GM12878 (cell line): ENCODE measurements at regions of chr6 and their contacts with region 1.

Region 1: DNA sequence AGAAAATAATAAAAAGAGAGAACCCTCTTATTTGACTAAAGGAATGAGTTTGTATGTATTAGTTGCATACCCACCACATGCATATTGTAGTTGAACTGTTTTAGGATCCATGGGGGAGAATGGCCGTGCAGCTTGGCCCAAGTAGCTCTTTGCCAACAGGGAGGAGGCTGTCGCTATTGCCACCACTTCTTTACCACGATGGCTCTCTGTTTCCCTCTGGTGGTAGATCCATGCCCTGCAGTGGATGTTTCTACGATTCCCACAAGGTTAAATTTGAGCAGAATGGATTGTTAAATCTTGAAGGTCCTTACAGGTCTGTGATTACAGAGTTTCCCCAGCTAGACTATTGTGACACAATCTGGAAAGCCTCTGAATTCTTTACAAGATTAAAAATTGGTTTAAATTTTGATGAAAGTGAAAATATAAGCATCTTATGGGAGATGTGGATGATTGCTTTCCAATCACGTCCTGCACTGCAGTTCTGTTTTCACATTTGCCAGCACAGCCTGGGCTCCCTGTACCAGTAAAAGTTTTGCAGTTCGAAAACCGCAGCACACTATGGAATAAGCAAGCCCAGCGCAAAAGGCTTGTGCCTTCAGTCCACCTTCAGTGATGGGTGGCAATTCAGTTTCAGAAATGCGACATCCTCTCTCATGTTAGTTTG is 34.4 kb upstream of the FNDC1 start:
- DNase-seq: peak; percentile 36
- ATAC-seq: peak; percentile 95
- H3K4me3 ChIP-seq: no peak overlapping the region
- H3K27ac ChIP-seq: no peak overlapping the region
- H3K4me1 ChIP-seq: no peaks in the 10 kb centered on the region
- H3K27me3 ChIP-seq: peaks cover 0 to 2% of the 10 kb centered on the region in 2 experiments; a peak in 1 of 4 replicates
- CTCF ChIP-seq: peak; percentile 89 to 97 (median 96)
- EP300 ChIP-seq: no peak
- POLR2A ChIP-seq: no peak
- RAD21 ChIP-seq: peak; percentile 98

Region 2: DNA sequence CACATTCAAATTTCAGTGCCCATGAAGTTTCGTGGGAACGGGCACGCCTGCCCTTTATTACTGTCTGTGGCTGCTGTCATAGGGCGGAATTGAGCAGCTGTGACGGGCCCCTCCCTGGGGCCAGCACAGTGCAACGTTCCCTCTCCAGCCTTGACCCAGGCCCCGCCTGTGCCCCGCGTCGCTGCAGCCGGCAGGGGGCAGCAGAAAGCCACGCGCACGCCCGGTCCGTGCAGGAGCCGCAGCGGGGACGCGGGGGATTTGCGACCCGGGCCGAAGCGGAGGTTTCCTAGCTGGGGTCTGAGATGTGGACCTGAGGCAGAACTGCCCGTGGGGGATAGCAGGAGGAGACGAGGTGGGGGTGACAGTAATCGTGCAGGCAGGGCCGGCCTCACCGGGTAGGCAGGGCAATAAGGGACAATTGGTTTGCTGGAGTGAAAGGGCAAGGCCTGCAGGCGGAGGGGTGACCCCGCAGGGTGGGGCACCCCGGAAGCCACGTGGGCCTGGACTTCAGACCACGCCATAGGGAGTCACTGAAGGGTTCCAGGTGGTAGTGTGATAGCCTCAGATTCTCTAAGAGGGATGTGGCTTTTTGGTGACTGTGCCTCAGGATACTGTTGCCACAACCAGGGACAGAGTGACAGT is 430.5 kb before region 1 on chr6:
- CTCF ChIA-PET with region 1: interaction called, 7 read pairs
- POLR2A ChIA-PET with region 1: no interaction called
- RAD21 ChIA-PET with region 1: interaction called, 5 read pairs
- SMC1A ChIA-PET with region 1: interaction called, 3 read pairs
- in situ Hi-C with region 1: loop called (anchors 10 kb)
- intact Hi-C with region 1: loop called (anchors 5 kb)
- DNase-seq: no peak
- ATAC-seq: peak; percentile 99
- H3K4me3 ChIP-seq: peak overlapping the region; percentile 45; the same call in 1 of the 2 replicates
- H3K27ac ChIP-seq: no peak overlapping the region
- H3K4me1 ChIP-seq: peaks cover 9% of the 10 kb centered on the region
- H3K27me3 ChIP-seq: no peaks in the 10 kb centered on the region
- CTCF ChIP-seq: peak; percentile 97 to 99 (median 98); a peak in 5 of 6 replicates
- EP300 ChIP-seq: no peak
- POLR2A ChIP-seq: no peak
- RAD21 ChIP-seq: peak; percentile 97

Region 3: DNA sequence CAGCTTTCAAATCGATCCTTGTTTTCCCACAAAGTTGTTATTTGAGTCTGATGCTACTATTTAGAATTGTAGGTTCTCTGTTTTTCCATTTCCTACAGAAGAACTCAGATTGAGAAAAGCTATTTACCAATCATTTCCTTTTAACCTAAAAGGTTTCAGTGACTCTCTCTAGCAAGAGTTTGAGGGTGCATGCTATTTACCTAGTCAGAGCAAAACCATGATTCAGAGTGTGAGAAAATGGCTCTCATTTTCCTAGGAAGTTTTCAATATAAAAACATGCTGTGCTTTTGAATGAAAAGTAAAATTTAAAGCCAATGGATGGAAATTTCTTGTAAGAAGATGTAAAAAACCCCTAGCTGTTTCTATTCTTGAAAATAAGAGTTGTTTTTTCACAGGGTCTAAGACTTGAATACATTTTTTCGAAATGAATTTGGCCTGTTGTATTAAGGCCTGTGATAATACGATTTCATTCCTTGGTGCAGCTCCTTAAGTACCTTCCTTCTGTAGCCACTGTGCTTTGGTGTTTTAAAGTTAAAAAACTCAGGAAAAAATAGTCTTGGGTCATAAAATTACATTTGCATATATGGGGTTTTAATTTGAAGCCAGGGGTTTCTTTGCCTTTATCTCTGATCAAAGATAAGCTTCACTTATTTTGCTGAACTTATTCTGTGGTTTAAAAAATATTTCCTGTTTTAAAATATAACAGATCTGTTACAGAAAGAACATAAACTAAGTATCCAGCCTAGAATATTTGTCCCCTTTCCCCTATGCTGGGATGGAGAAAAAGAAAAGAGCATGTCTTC is 116.9 kb before region 1 on chr6:
- CTCF ChIA-PET with region 1: interaction called, 482 read pairs
- POLR2A ChIA-PET with region 1: no interaction called
- RAD21 ChIA-PET with region 1: interaction called, 11 read pairs
- SMC1A ChIA-PET with region 1: interaction called, 14 read pairs
- in situ Hi-C with region 1: no loop called
- intact Hi-C with region 1: no loop called
- DNase-seq: no peak
- ATAC-seq: peak; percentile 87
- H3K4me3 ChIP-seq: no peak overlapping the region
- H3K27ac ChIP-seq: no peak overlapping the region
- H3K4me1 ChIP-seq: peaks cover 8% of the 10 kb centered on the region
- H3K27me3 ChIP-seq: no peaks in the 10 kb centered on the region
- CTCF ChIP-seq: no peak
- EP300 ChIP-seq: no peak
- POLR2A ChIP-seq: no peak
- RAD21 ChIP-seq: no peak

Region 4: DNA sequence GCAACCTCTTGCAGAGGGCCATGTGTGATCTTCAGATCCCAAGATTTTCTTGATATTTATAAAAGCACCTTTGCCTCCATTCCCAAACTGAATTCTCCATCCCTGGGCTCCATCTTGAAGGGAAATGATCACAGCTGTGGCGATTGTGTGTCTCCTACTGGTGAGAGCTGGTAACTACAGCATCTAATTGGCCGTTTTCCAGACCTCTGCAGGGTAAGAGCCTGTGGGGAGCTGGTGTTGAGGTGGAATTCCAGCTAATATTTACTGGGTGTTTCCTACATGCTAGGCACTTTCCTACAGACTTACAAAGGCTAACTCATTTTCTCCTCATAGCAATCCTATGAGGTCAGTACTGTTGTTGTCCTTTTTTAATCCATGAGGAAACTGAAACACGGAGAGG is 24.8 kb before region 1 on chr6:
- CTCF ChIA-PET with region 1: interaction called, 529 read pairs
- POLR2A ChIA-PET with region 1: interaction called, 12 read pairs
- RAD21 ChIA-PET with region 1: interaction called, 117 read pairs
- SMC1A ChIA-PET with region 1: interaction called, 292 read pairs
- in situ Hi-C with region 1: no loop called
- intact Hi-C with region 1: no loop called
- DNase-seq: no peak
- ATAC-seq: no peak
- H3K4me3 ChIP-seq: no peak overlapping the region
- H3K27ac ChIP-seq: no peak overlapping the region
- H3K4me1 ChIP-seq: peaks cover 36% of the 10 kb centered on the region
- H3K27me3 ChIP-seq: peaks cover 0 to 3% of the 10 kb centered on the region in 2 experiments; a peak in 1 of 4 replicates
- CTCF ChIP-seq: peak; percentile 66 to 88 (median 77)
- EP300 ChIP-seq: no peak
- POLR2A ChIP-seq: no peak
- RAD21 ChIP-seq: peak; percentile 82

Region 5: GRCh38 chr6:159151266-159151855 is 16.5 kb after region 1 on chr6:
- CTCF ChIA-PET with region 1: interaction called, 36 read pairs
- POLR2A ChIA-PET with region 1: no interaction called
- RAD21 ChIA-PET with region 1: interaction called, 4 read pairs
- SMC1A ChIA-PET with region 1: interaction called, 9 read pairs
- in situ Hi-C with region 1: no loop called
- intact Hi-C with region 1: no loop called
- DNase-seq: no peak
- ATAC-seq: peak; percentile 77
- H3K4me3 ChIP-seq: no peak overlapping the region
- H3K27ac ChIP-seq: no peak overlapping the region
- H3K4me1 ChIP-seq: no peaks in the 10 kb centered on the region
- H3K27me3 ChIP-seq: peaks cover 0 to 4% of the 10 kb centered on the region in 2 experiments; a peak in 1 of 4 replicates
- CTCF ChIP-seq: peak; percentile 66 to 83 (median 80)
- EP300 ChIP-seq: no peak
- POLR2A ChIP-seq: no peak
- RAD21 ChIP-seq: peak; percentile 47

Region 6: GRCh38 chr6:159184559-159184958 is 49.7 kb after region 1 on chr6:
- CTCF ChIA-PET with region 1: no interaction called
- POLR2A ChIA-PET with region 1: no interaction called
- RAD21 ChIA-PET with region 1: no interaction called
- SMC1A ChIA-PET with region 1: no interaction called
- in situ Hi-C with region 1: no loop called
- intact Hi-C with region 1: no loop called
- DNase-seq: no peak
- ATAC-seq: no peak
- H3K4me3 ChIP-seq: no peak overlapping the region
- H3K27ac ChIP-seq: no peak overlapping the region
- H3K4me1 ChIP-seq: no peaks in the 10 kb centered on the region
- H3K27me3 ChIP-seq: peaks cover 0 to 2% of the 10 kb centered on the region in 2 experiments; a peak in 1 of 4 replicates
- CTCF ChIP-seq: no peak
- EP300 ChIP-seq: no peak
- POLR2A ChIP-seq: no peak
- RAD21 ChIP-seq: no peak

Region 7: GRCh38 chr6:159203304-159204005 is 68.6 kb after region 1 on chr6:
- CTCF ChIA-PET with region 1: no interaction called
- POLR2A ChIA-PET with region 1: no interaction called
- RAD21 ChIA-PET with region 1: no interaction called
- SMC1A ChIA-PET with region 1: no interaction called
- in situ Hi-C with region 1: no loop called
- intact Hi-C with region 1: no loop called
- DNase-seq: no peak
- ATAC-seq: no peak
- H3K4me3 ChIP-seq: no peak overlapping the region
- H3K27ac ChIP-seq: no peak overlapping the region
- H3K4me1 ChIP-seq: no peaks in the 10 kb centered on the region
- H3K27me3 ChIP-seq: peaks cover 2 to 3% of the 10 kb centered on the region in 2 experiments; a peak in 3 of 4 replicates
- CTCF ChIP-seq: no peak
- EP300 ChIP-seq: no peak
- POLR2A ChIP-seq: no peak
- RAD21 ChIP-seq: no peak